Activated CD4-positive, alpha-beta T cell treated with anti-CD3 and anti-CD28 coated beads, Interleukin-2, amount 10 ng/mL, durations not matched to agents 24 days and 14 days (primary cell): ENCODE measurements at regions of chr11 and their contacts with region 1.

Region 1: GRCh38 chr11:60992842-60993409 is 21.4 kb downstream of the CD6 start:
- DNase-seq: no peak
- H3K4me3 Mint-ChIP-seq: peak overlapping the region; percentile 69
- H3K27ac Mint-ChIP-seq: peak overlapping the region; percentile 96
- H3K4me1 Mint-ChIP-seq: peaks cover 68% of the 10 kb centered on the region
- H3K27me3 Mint-ChIP-seq: no peaks in the 10 kb centered on the region

Region 2: DNA sequence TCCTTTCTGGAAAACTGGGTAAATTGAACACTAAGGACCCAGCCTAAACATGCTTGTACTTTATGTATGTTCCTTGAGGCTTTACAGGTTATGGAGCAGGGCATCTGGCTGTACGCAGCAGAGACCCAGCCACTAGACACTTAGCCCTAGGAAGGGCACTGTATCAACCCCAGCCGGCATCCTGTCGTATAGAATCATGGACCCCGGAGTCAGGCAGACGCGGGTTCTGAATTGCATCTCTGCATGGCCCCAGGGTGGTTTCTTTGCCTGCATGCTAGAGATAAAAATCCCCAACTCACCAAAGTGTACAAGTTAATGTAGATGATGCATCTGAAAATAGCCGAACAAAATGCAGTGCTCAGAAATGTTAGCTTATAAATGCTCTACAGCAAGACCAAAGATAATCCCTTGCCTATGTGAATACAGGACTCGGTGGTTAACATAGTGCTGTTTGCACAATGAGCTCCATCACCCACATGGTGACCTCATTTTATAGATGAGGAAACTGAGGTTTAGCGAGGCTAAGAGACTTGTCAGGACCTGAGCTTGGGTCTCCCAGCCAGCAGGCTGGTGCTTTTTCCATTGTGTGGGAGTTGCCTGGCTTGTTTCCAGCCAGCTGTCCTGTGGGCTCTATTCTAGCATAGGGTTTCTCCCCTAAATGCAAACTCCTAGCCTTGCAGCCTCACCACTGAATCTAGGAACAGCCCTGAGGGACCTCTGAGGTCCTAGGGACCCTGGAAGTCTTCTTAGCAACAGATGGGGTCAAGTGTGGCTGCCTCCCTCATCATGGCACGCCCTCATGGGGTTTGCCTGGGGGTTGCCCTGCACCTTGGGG is 14.2 kb before region 1 on chr11:
- intact Hi-C with region 1: loop called (anchors 2 kb)
- DNase-seq: peak; percentile 84
- H3K4me3 Mint-ChIP-seq: peak overlapping the region; percentile 90
- H3K27ac Mint-ChIP-seq: peak overlapping the region; percentile 95
- H3K4me1 Mint-ChIP-seq: peaks cover 72% of the 10 kb centered on the region
- H3K27me3 Mint-ChIP-seq: no peaks in the 10 kb centered on the region

Region 3: GRCh38 chr11:61679893-61680621 is 687.1 kb after region 1 on chr11 and contains the start of gene DAGLA:
- intact Hi-C with region 1: no loop called
- DNase-seq: peak; percentile 94
- H3K4me3 Mint-ChIP-seq: peak within 1 kb of the TSS; percentile 75
- H3K27ac Mint-ChIP-seq: peak within 1 kb of the TSS; percentile 9
- H3K4me1 Mint-ChIP-seq: peaks cover 5% of the 10 kb centered on the region
- H3K27me3 Mint-ChIP-seq: peaks cover 31% of the 10 kb centered on the region
- total RNA-seq, gene DAGLA: 0.09 and 0.14 TPM in 2 replicates